Panc1 (cell line): ENCODE measurements at regions of chr4 and their contacts with region 1.

Region 1: DNA sequence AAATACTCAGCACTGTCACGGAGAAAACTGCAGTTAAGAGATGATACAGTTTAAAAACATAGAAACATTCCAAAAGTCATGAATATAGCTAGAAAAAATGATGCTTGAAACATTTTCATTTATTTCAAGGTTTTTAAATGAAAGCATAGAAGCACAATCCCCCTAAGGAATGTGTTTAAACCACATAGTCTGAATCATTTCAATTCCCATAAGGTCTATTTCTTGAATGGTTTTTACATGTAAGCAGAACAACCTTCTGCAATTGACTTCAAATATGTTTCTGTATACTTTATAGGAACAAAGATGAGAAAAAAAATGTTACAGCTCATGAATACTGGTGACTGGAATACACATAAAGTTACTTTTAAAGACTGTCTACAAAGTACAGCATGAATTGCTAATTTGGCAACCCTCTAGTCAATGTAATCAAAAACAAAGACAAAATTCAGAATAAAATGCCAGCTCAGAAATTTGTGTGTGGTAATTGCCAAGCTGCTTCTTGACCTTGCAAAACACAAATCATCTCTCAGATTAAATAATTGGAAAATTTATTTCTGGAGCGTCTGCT is 886.4 kb upstream of the ADGRL3 start:
- DNase-seq: no peak
- ATAC-seq: no peak
- H3K4me3 ChIP-seq: no peak overlapping the region
- H3K27ac ChIP-seq: no peak overlapping the region
- H3K4me1 ChIP-seq: no peaks in the 10 kb centered on the region
- H3K27me3 ChIP-seq: no peaks in the 10 kb centered on the region
- CTCF ChIP-seq: no peak

Region 2: GRCh38 chr4:60241866-60242265 is 71.8 kb before region 1 on chr4:
- CTCF ChIA-PET with region 1: no interaction called
- POLR2A ChIA-PET with region 1: no interaction called
- in situ Hi-C with region 1: no loop called
- intact Hi-C with region 1: loop called (anchors 10 kb)
- DNase-seq: no peak
- ATAC-seq: no peak
- H3K4me3 ChIP-seq: no peak overlapping the region
- H3K27ac ChIP-seq: no peak overlapping the region
- H3K4me1 ChIP-seq: no peaks in the 10 kb centered on the region
- H3K27me3 ChIP-seq: no peaks in the 10 kb centered on the region
- CTCF ChIP-seq: no peak